B cell (primary cell): ENCODE measurements at regions of chr9 and their contacts with region 1.

Region 1: GRCh38 chr9:90914868-90915483 is 113.4 kb downstream of the SYK start:
- DNase-seq: peak; percentile 85
- ATAC-seq: peak; percentile 97
- H3K4me3 ChIP-seq: no peak overlapping the region
- H3K4me3 Mint-ChIP-seq: no peak overlapping the region
- H3K27ac ChIP-seq: no peak overlapping the region
- H3K27ac Mint-ChIP-seq: no peak overlapping the region
- H3K4me1 ChIP-seq: peaks cover 16 to 22% of the 10 kb centered on the region in 2 donors
- H3K4me1 Mint-ChIP-seq: peaks cover 24% of the 10 kb centered on the region
- H3K27me3 ChIP-seq: no peaks in the 10 kb centered on the region
- H3K27me3 Mint-ChIP-seq: no peaks in the 10 kb centered on the region
- CTCF ChIP-seq: peak; percentile 91

Region 2: GRCh38 chr9:90925581-90926257 is 10.7 kb after region 1 on chr9:
- CTCF ChIA-PET with region 1: interaction called, 16 read pairs
- POLR2A ChIA-PET with region 1: no interaction called
- intact Hi-C with region 1: no loop called
- DNase-seq: no peak
- ATAC-seq: no peak
- H3K4me3 ChIP-seq: no peak overlapping the region
- H3K4me3 Mint-ChIP-seq: no peak overlapping the region
- H3K27ac ChIP-seq: no peak overlapping the region
- H3K27ac Mint-ChIP-seq: no peak overlapping the region
- H3K4me1 ChIP-seq: peaks cover 12 to 14% of the 10 kb centered on the region in 2 donors
- H3K4me1 Mint-ChIP-seq: peaks cover 12% of the 10 kb centered on the region
- H3K27me3 ChIP-seq: peaks cover 0 to 7% (median 1%) of the 10 kb centered on the region in 4 experiments
- H3K27me3 Mint-ChIP-seq: peaks cover 12% of the 10 kb centered on the region
- CTCF ChIP-seq: no peak

Region 3: DNA sequence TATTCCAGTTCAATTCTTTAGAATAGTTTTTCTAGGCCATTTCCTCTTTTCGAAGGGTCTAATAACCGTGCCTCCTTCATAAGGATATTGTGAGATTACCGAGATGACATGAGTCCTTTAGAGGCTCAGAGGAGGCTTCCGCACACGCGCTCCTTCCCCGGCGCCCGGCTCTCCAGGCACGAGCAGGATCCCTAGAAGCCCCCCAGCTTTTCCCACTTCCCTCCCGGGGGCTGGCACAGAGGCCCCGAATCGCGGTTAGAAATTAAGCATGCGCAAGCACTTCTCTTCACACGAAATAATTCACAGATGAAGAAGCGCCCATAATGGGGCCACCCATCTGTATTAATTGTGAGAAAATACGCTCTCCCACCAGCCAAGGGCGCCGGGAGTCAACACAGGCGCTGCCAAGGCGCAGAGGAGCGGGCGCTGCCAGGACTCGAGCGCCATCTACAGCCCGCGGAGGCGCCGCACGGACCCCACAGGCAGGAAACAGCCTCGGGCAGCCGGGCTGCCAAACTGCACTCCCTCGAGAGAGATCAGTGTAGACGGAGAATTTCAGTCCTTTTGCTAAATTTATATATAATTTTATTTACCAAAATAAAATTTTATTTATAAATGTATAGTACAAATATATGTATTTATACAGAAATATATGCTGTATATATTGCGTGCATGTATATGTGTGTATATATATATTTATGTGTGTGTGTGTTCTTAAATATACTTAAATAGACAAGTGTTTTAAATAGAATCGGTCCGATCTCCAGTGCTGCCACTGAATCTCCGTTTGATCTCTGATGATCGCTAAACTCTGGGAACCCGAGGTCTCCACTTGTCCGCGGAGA is 766.7 kb after region 1 on chr9:
- CTCF ChIA-PET with region 1: interaction called, 9 read pairs
- POLR2A ChIA-PET with region 1: no interaction called
- intact Hi-C with region 1: loop called (anchors 1 kb)
- DNase-seq: peak; percentile 71
- ATAC-seq: peak; percentile 76
- H3K4me3 ChIP-seq: peak overlapping the region in 4 of 5 experiments; percentile 14 to 54 (median 30)
- H3K4me3 Mint-ChIP-seq: peak overlapping the region; percentile 72
- H3K27ac ChIP-seq: no peak overlapping the region
- H3K27ac Mint-ChIP-seq: no peak overlapping the region
- H3K4me1 ChIP-seq: peaks cover 0 to 7% of the 10 kb centered on the region in 2 donors
- H3K4me1 Mint-ChIP-seq: peaks cover 5% of the 10 kb centered on the region
- H3K27me3 ChIP-seq: peaks cover 0 to 25% (median 9%) of the 10 kb centered on the region in 4 experiments
- H3K27me3 Mint-ChIP-seq: peaks cover 49% of the 10 kb centered on the region
- CTCF ChIP-seq: peak; percentile 91

Region 4: DNA sequence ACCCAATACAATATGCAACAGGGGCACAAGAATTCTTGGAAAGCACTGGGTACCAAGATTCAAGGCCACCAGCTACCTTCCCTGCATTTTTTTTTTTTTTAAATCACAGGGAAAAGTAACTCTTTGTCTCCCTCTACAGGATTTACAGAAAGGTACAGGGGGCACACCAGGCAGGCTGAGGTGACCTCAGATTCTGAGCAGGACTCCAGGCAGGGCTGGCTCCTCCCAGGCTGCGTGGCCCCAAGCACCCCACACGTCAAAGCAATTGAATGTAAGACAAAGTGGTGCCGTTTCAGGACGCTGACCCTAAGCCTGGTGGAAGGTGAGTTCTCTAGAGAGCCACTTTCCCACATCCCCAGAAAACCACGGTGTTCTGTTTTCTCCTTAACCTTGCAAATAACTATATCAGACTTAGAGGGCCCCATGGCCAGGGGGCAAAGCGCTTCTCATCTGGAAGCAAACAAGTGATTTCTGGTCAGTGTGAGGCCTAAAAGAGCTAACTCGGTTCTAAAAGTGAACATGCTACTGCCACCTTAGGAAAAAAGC is 812.4 kb after region 1 on chr9:
- CTCF ChIA-PET with region 1: interaction called, 129 read pairs
- POLR2A ChIA-PET with region 1: no interaction called
- intact Hi-C with region 1: loop called (anchors 1 kb)
- DNase-seq: peak; percentile 67
- ATAC-seq: peak; percentile 89
- H3K4me3 ChIP-seq: no peak overlapping the region
- H3K4me3 Mint-ChIP-seq: no peak overlapping the region
- H3K27ac ChIP-seq: no peak overlapping the region
- H3K27ac Mint-ChIP-seq: no peak overlapping the region
- H3K4me1 ChIP-seq: no peaks in the 10 kb centered on the region
- H3K4me1 Mint-ChIP-seq: no peaks in the 10 kb centered on the region
- H3K27me3 ChIP-seq: no peaks in the 10 kb centered on the region
- H3K27me3 Mint-ChIP-seq: no peaks in the 10 kb centered on the region
- CTCF ChIP-seq: peak; percentile 79

Region 5: DNA sequence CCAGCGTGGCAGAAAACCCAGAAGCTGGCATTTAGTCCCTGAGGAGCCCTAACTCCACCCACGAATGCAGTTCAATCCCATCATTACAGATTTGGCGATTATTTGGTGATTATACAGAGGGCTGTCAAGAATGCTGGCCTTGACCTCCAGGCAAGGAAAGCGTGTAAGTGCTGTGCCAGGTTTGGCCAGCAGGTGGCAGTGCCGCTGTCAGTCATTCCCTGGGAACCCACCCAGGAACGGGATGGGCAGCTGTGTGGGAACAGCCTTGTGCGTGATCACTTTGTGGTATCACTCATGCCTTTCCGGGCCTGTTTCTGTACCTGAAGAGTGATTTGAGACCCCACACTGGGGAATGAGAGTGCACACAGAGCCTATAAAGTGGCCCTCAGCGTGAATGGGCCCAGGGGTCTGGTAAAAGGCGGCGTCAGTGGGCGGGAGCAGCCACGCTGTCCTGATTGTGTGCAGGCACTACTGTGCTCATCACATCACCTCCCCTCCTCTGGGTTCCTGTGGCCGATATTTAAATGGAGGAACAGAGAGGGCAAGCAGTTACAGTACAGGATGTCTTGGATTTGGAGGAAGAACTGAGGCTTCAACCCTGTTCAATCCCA is 819.5 kb after region 1 on chr9:
- CTCF ChIA-PET with region 1: interaction called, 129 read pairs
- POLR2A ChIA-PET with region 1: no interaction called
- intact Hi-C with region 1: loop called (anchors 2 kb)
- DNase-seq: peak; percentile 67
- ATAC-seq: peak; percentile 43
- H3K4me3 ChIP-seq: no peak overlapping the region
- H3K4me3 Mint-ChIP-seq: no peak overlapping the region
- H3K27ac ChIP-seq: no peak overlapping the region
- H3K27ac Mint-ChIP-seq: no peak overlapping the region
- H3K4me1 ChIP-seq: no peaks in the 10 kb centered on the region
- H3K4me1 Mint-ChIP-seq: no peaks in the 10 kb centered on the region
- H3K27me3 ChIP-seq: peaks cover 0 to 10% (median 0%) of the 10 kb centered on the region in 4 experiments
- H3K27me3 Mint-ChIP-seq: peaks cover 26% of the 10 kb centered on the region
- CTCF ChIP-seq: peak; percentile 99